ENCODE measurements at regions of chr7 and their contacts with region 1.

Region 1: GRCh38 chr7:25758559-25758958 is 393.4 kb upstream of the NFE2L3 start:
- DNase-seq: no peak
- H3K4me3 ChIP-seq: no peak overlapping the region
- H3K27ac ChIP-seq: no peak overlapping the region
- H3K4me1 ChIP-seq: peaks cover 0 to 40% (median 35%) of the 10 kb centered on the region in 4 donors
- H3K27me3 ChIP-seq: no peaks in the 10 kb centered on the region
- CTCF ChIP-seq: no peak
- EP300 ChIP-seq: no peak
- POLR2A ChIP-seq: no peak

Region 2: DNA sequence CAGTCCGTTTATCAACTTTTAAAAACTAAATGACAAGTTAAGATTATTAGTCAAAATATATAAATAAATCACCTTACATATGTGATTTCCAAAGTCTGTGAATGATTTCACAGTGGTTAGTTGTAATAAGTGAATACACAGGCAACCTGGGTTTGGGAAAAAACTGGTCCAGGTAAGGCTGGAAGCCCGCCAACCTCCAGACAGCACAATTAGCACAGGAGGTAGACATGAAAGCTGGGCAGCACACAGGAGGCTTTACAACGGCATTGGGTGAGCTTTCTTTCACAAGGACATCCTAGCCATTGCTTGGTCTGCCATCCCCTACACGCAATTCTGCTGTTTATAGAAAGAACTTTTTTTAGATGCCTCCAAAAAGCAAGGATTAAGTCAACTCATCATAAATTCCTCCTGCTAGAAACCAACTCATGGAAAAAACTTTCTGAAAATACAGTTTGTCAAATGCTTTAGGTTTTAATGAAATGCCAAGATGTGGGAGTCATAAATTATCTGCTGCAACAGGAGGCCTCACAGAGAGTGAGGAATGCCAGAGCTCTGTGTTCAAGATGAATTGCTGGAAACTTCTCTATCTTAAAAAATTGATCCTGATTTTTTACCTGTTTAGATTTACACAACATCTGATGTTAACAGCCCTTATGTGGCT is 46.6 kb after region 1 on chr7:
- intact Hi-C with region 1: loop called (anchors 5 kb)
- DNase-seq: no peak
- H3K4me3 ChIP-seq: no peak overlapping the region
- H3K27ac ChIP-seq: peak overlapping the region; percentile 27 to 63 (median 55)
- H3K4me1 ChIP-seq: peaks cover 0 to 70% (median 51%) of the 10 kb centered on the region in 4 donors
- H3K27me3 ChIP-seq: no peaks in the 10 kb centered on the region
- CTCF ChIP-seq: no peak
- EP300 ChIP-seq: no peak
- POLR2A ChIP-seq: no peak

Region 3: GRCh38 chr7:25951031-25951948 is 192.7 kb after region 1 on chr7:
- intact Hi-C with region 1: no loop called
- DNase-seq: peak; percentile 95
- H3K4me3 ChIP-seq: peak overlapping the region; percentile 38 to 75 (median 62)
- H3K27ac ChIP-seq: peak overlapping the region; percentile 29 to 67 (median 60)
- H3K4me1 ChIP-seq: peaks cover 0 to 18% (median 16%) of the 10 kb centered on the region in 4 donors
- H3K27me3 ChIP-seq: peaks cover 0 to 5% (median 0%) of the 10 kb centered on the region in 3 donors
- CTCF ChIP-seq: no peak
- EP300 ChIP-seq: no peak
- POLR2A ChIP-seq: peak in 1 of 2 donors; percentile 62

Measured in sigmoid colon (tissue), 7 donors.